Activated CD8-positive, alpha-beta T cell treated with anti-CD3 and anti-CD28 coated beads, Interleukin-2, amount 10 ng/mL, durations not matched to agents 7 days and 5 days (primary cell): ENCODE measurements at regions of chr21 and their contacts with region 1.

Region 1: GRCh38 chr21:34351786-34352241 is 12.0 kb upstream of the KCNE2 start:
- DNase-seq: peak; percentile 51
- ATAC-seq: peak; percentile 70
- H3K4me3 Mint-ChIP-seq: no peak overlapping the region
- H3K27ac Mint-ChIP-seq: no peak overlapping the region
- H3K4me1 Mint-ChIP-seq: peaks cover 11% of the 10 kb centered on the region
- H3K27me3 Mint-ChIP-seq: peaks cover 15% of the 10 kb centered on the region

Region 2: DNA sequence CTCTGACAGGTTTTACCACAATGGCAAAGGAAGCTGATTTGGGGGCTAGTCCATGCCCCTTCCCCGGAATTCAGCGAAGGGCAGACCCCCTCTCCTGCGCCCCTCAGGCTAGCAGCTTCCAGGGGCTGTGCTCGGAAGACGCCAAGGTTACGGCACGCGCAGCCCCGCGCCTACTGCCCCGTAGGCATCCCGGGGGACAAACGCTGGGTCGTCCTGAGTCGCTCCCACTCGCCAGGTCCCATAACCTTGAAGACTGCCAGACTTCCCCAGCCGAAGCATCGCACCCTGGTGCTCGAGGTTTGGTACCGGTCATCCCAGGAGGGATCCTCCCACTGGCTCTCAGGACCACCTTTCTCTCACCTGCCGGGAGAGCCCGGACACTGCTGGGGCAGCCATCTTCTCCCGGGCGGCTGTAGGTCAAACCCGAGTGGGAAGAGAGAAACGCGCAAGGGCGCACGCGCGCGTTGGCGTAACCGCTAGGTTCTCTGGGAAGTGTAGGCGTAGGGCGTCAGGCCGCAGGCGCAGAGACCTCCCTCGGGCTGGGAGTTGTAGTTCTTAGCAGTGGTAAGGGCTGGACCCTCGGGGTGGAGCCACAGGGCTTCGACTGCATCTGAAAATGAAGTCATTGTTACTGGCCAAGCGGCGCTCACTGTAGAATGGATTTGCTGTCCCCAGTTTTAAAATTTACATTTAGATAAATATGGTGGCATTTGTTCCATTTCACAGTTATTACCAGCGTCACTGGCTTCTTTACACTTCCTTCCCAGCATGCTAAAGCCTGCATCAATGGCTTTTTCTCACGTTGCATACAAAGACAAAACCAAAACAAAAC is 436.2 kb before region 1 on chr21 and contains the start of gene ATP5PO:
- CTCF ChIA-PET with region 1: interaction called, 11 read pairs
- POLR2A ChIA-PET with region 1: interaction called, 3 read pairs
- DNase-seq: peak; percentile 98
- ATAC-seq: peak; percentile 100
- H3K4me3 Mint-ChIP-seq: peak within 1 kb of the TSS; percentile 96
- H3K27ac Mint-ChIP-seq: peak within 1 kb of the TSS; percentile 95
- H3K4me1 Mint-ChIP-seq: peaks cover 36% of the 10 kb centered on the region
- H3K27me3 Mint-ChIP-seq: no peaks in the 10 kb centered on the region
- total RNA-seq, gene ATP5PO: 229 to 231 TPM

Region 3: GRCh38 chr21:34078915-34079314 is 272.9 kb before region 1 on chr21:
- CTCF ChIA-PET with region 1: interaction called, 26 read pairs
- POLR2A ChIA-PET with region 1: no interaction called
- DNase-seq: peak; percentile 56
- ATAC-seq: no peak
- H3K4me3 Mint-ChIP-seq: peak overlapping the region; percentile 49
- H3K27ac Mint-ChIP-seq: peak overlapping the region; percentile 73
- H3K4me1 Mint-ChIP-seq: peaks cover 90% of the 10 kb centered on the region
- H3K27me3 Mint-ChIP-seq: no peaks in the 10 kb centered on the region

Region 4: GRCh38 chr21:34091607-34092006 is 260.2 kb before region 1 on chr21:
- CTCF ChIA-PET with region 1: interaction called, 13 read pairs
- POLR2A ChIA-PET with region 1: no interaction called
- DNase-seq: no peak
- ATAC-seq: no peak
- H3K4me3 Mint-ChIP-seq: no peak overlapping the region
- H3K27ac Mint-ChIP-seq: no peak overlapping the region
- H3K4me1 Mint-ChIP-seq: peaks cover 43% of the 10 kb centered on the region
- H3K27me3 Mint-ChIP-seq: no peaks in the 10 kb centered on the region

Region 5: DNA sequence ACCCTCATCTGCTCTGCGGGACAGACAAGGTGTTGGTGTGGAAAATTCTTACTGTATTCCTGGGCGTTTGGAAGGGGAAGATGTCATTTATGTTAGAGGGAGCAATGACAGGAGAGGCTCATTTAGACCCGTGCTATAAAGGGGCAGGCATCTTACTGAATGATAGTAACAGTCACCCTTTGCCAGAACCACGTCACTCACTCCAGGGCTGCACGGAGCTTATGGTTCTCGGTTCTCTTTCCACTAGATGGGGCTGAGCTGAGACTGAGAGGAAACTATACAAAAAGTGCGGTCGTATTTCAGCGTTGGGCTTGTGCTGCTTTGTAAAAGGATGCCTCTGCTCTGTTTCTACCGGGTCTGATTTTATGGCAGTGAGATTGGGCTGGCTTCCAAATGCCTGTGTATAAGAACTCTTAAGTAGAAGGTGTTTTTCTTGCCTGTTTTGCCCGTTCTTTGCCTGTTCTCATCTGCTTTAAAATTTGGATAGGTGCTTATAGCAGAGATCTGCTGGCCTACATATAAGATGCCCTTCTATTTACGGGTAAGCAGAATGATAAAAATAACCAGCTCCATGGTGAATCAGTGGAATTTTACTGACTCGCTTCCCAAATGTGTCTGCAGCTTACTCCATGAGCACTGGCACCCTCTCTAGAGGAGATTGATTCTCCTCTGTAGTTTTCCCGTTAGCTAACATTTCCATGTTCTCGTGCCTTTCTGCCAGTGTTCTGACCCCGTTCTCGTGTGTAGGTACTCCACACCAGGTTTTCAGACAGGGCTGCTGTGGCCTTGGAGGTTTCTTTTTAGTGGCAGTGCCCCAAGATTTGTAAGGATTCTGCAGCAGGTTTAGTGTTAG is 222.5 kb before region 1 on chr21:
- CTCF ChIA-PET with region 1: interaction called, 24 read pairs
- POLR2A ChIA-PET with region 1: no interaction called
- DNase-seq: peak; percentile 85
- ATAC-seq: peak; percentile 90
- H3K4me3 Mint-ChIP-seq: peak overlapping the region; percentile 38
- H3K27ac Mint-ChIP-seq: peak overlapping the region; percentile 83
- H3K4me1 Mint-ChIP-seq: peaks cover 76% of the 10 kb centered on the region
- H3K27me3 Mint-ChIP-seq: no peaks in the 10 kb centered on the region

Region 6: DNA sequence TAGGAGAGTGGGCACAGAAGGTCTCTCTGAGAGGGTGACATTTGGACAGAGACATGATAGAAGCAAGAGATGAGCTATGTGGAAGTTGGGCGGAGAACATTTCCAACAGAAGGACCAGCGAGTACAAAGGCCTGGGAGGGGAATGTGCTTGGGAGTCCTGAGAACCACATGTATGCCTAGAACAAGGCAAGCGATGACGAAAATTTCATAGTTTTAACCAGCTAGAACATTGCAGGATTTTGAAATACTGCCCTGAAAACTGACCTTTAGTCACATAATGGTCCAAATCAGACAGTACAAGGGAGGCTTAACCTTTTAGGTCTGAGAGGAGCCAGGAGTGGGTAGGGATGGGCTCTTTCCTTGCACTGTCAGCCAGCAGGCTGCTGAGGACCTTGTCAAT is 210.4 kb before region 1 on chr21:
- CTCF ChIA-PET with region 1: no interaction called
- POLR2A ChIA-PET with region 1: no interaction called
- DNase-seq: no peak
- ATAC-seq: no peak
- H3K4me3 Mint-ChIP-seq: no peak overlapping the region
- H3K27ac Mint-ChIP-seq: no peak overlapping the region
- H3K4me1 Mint-ChIP-seq: peaks cover 20% of the 10 kb centered on the region
- H3K27me3 Mint-ChIP-seq: no peaks in the 10 kb centered on the region

Region 7: GRCh38 chr21:34202553-34203372 is 149.1 kb before region 1 on chr21:
- CTCF ChIA-PET with region 1: interaction called, 12 read pairs
- POLR2A ChIA-PET with region 1: interaction called, 3 read pairs
- DNase-seq: no peak
- ATAC-seq: no peak
- H3K4me3 Mint-ChIP-seq: peak overlapping the region; percentile 73
- H3K27ac Mint-ChIP-seq: no peak overlapping the region
- H3K4me1 Mint-ChIP-seq: peaks cover 60% of the 10 kb centered on the region
- H3K27me3 Mint-ChIP-seq: no peaks in the 10 kb centered on the region

Region 8: DNA sequence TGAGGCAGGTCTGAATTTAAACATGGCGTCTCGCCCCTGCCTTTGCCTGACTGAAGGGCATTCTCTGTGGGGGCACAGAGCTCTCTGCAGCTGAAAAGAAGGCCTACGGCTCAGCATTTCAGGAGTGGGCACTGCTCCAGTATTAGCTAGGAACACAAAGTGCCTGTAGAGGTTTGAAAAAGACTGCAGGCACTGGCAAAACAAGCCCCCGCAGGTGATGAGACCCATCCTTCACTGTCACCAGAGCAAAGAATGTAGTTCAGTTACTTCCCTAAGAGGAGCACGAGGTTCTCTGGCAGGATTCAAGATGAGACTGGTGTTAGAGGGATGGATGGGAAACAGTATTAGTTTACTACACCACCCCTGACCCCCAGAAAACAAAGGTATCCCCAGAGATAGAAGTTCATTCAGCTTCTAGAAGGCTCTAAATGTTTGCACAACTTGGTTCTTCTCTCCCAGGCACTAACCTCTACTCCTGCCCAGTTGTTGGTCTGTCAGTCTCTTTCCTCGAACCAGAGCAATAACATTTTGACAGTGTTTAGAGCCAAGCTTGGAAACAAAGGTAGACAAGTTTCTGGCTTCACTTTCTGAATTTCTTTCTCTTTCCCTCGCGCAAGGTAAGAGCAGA is 89.9 kb before region 1 on chr21:
- CTCF ChIA-PET with region 1: no interaction called
- POLR2A ChIA-PET with region 1: no interaction called
- DNase-seq: no peak
- ATAC-seq: no peak
- H3K4me3 Mint-ChIP-seq: no peak overlapping the region
- H3K27ac Mint-ChIP-seq: no peak overlapping the region
- H3K4me1 Mint-ChIP-seq: no peaks in the 10 kb centered on the region
- H3K27me3 Mint-ChIP-seq: peaks cover 15% of the 10 kb centered on the region

Region 9: GRCh38 chr21:34276711-34277425 is 74.9 kb before region 1 on chr21:
- CTCF ChIA-PET with region 1: no interaction called
- POLR2A ChIA-PET with region 1: no interaction called
- DNase-seq: no peak
- ATAC-seq: no peak
- H3K4me3 Mint-ChIP-seq: no peak overlapping the region
- H3K27ac Mint-ChIP-seq: no peak overlapping the region
- H3K4me1 Mint-ChIP-seq: no peaks in the 10 kb centered on the region
- H3K27me3 Mint-ChIP-seq: peaks cover 8% of the 10 kb centered on the region

Region 10: DNA sequence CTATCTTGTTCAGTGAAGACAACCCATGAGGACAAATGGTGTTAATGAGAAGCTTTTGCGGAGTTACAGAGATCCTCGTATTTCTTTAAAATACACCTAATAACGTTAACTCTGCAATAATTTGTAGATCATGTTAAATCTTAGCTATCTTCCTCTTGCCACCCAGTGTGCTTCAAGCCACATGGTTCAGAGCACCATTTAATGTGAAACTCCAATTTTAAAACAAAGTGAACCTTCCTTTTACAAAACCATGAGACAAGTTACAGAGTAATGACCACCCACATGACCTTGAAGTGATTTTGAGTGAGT is 10.3 kb after region 1 on chr21:
- CTCF ChIA-PET with region 1: interaction called, 29 read pairs
- POLR2A ChIA-PET with region 1: no interaction called
- DNase-seq: no peak
- ATAC-seq: peak; percentile 26
- H3K4me3 Mint-ChIP-seq: no peak overlapping the region
- H3K27ac Mint-ChIP-seq: no peak overlapping the region
- H3K4me1 Mint-ChIP-seq: peaks cover 7% of the 10 kb centered on the region
- H3K27me3 Mint-ChIP-seq: peaks cover 11% of the 10 kb centered on the region

Region 11: GRCh38 chr21:34603002-34603709 is 251.3 kb after region 1 on chr21:
- CTCF ChIA-PET with region 1: no interaction called
- POLR2A ChIA-PET with region 1: no interaction called
- DNase-seq: peak; percentile 72
- ATAC-seq: peak; percentile 87
- H3K4me3 Mint-ChIP-seq: no peak overlapping the region
- H3K27ac Mint-ChIP-seq: no peak overlapping the region
- H3K4me1 Mint-ChIP-seq: no peaks in the 10 kb centered on the region
- H3K27me3 Mint-ChIP-seq: no peaks in the 10 kb centered on the region